Ascending aorta (tissue), 2 donors: ENCODE measurements at regions of chr19 and their contacts with region 1.

Region 1: GRCh38 chr19:57578487-57579205 is at the start of gene ZNF416:
- DNase-seq: peak; percentile 92 to 99
- H3K4me3 ChIP-seq: peak within 1 kb of the TSS; percentile 87 to 91
- H3K27ac ChIP-seq: peak within 1 kb of the TSS; percentile 39 to 62
- H3K4me1 ChIP-seq: peaks cover 0 to 14% of the 10 kb centered on the region in 2 donors
- H3K27me3 ChIP-seq: no peaks in the 10 kb centered on the region
- CTCF ChIP-seq: peak in 1 of 3 experiments; percentile 14
- total RNA-seq, gene ZNF416: 2.7 TPM

Region 2: GRCh38 chr19:57165846-57166245 is 412.8 kb before region 1 on chr19:
- intact Hi-C with region 1: no loop called
- DNase-seq: no peak
- H3K4me3 ChIP-seq: no peak overlapping the region
- H3K27ac ChIP-seq: no peak overlapping the region
- H3K4me1 ChIP-seq: no peaks in the 10 kb centered on the region
- H3K27me3 ChIP-seq: no peaks in the 10 kb centered on the region
- CTCF ChIP-seq: no peak

Region 3: GRCh38 chr19:57527136-57527881 is 51.3 kb before region 1 on chr19 and contains the start of gene ZNF549:
- intact Hi-C with region 1: loop called (anchors 5 kb)
- DNase-seq: peak; percentile 63 to 94
- H3K4me3 ChIP-seq: peak within 1 kb of the TSS; percentile 81 to 85
- H3K27ac ChIP-seq: peak within 1 kb of the TSS; percentile 64 to 74
- H3K4me1 ChIP-seq: peaks cover 2 to 3% of the 10 kb centered on the region in 2 donors
- H3K27me3 ChIP-seq: no peaks in the 10 kb centered on the region
- CTCF ChIP-seq: no peak
- total RNA-seq, gene ZNF549: 2.2 TPM

Region 4: GRCh38 chr19:57559404-57560025 is 19.1 kb before region 1 on chr19 and contains the start of gene ZNF550:
- intact Hi-C with region 1: loop called (anchors 1 kb)
- DNase-seq: peak; percentile 56 to 94
- H3K4me3 ChIP-seq: peak within 1 kb of the TSS; percentile 84 to 99
- H3K27ac ChIP-seq: peak within 1 kb of the TSS; percentile 2 to 44
- H3K4me1 ChIP-seq: peaks cover 0 to 8% of the 10 kb centered on the region in 2 donors
- H3K27me3 ChIP-seq: no peaks in the 10 kb centered on the region
- CTCF ChIP-seq: no peak
- total RNA-seq, gene ZNF550: 22.7 TPM

Region 5: DNA sequence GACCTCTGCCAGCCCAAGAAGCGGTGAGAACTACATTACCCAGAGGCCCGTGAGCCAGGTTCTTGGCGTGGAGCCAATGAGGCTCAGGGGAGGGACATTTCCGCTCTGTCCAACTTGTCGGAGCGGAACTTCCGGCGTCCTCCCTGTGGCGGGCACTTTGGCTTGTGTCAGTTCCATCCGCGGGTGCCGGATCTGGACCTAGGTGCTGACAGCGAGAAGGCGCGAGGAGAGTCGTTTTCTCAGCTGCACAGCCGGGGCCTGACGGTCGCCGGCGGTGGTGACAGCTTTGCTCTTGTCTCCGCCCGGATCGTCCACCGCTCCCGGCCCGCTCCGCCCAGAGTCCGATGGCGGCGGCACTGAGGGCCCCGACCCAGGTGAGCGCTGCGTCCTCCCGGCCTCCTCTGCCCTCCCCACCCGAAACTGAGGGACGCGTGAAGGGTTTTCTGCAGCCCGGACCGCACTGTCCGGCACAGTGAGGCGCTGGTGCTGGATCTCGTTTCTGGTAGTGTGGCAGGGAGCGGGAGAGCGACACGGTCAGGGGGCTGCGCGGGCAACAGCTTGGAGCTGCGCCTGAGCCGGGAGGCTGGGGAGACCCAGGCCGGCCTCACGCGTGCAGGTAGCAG is 21.2 kb after region 1 on chr19 and contains the start of gene ZNF530:
- intact Hi-C with region 1: loop called (anchors 1 kb)
- DNase-seq: peak; percentile 64 to 97
- H3K4me3 ChIP-seq: peak within 1 kb of the TSS; percentile 56 to 70
- H3K27ac ChIP-seq: no peak within 1 kb of the TSS
- H3K4me1 ChIP-seq: peaks cover 0 to 4% of the 10 kb centered on the region in 2 donors
- H3K27me3 ChIP-seq: no peaks in the 10 kb centered on the region
- CTCF ChIP-seq: no peak
- total RNA-seq, gene ZNF530: 2.6 TPM

Region 6: GRCh38 chr19:57814505-57815251 is 236.0 kb after region 1 on chr19 and contains the start of gene ZNF552:
- intact Hi-C with region 1: loop called (anchors 2 kb)
- DNase-seq: peak; percentile 70 to 93
- H3K4me3 ChIP-seq: peak within 1 kb of the TSS; percentile 85 to 87
- H3K27ac ChIP-seq: peak within 1 kb of the TSS; percentile 71 to 75
- H3K4me1 ChIP-seq: peaks cover 2 to 8% of the 10 kb centered on the region in 2 donors
- H3K27me3 ChIP-seq: no peaks in the 10 kb centered on the region
- CTCF ChIP-seq: no peak
- total RNA-seq, gene ZNF552: 6.9 TPM

Region 7: GRCh38 chr19:57927587-57927986 is 348.9 kb after region 1 on chr19:
- intact Hi-C with region 1: loop called (anchors 10 kb)
- DNase-seq: no peak
- H3K4me3 ChIP-seq: no peak overlapping the region
- H3K27ac ChIP-seq: no peak overlapping the region
- H3K4me1 ChIP-seq: no peaks in the 10 kb centered on the region
- H3K27me3 ChIP-seq: no peaks in the 10 kb centered on the region
- CTCF ChIP-seq: no peak

Region 8: GRCh38 chr19:58002384-58003173 is 423.9 kb after region 1 on chr19 and contains the start of gene ZNF606:
- intact Hi-C with region 1: loop called (anchors 5 kb)
- DNase-seq: peak; percentile 25 to 90
- H3K4me3 ChIP-seq: peak within 1 kb of the TSS; percentile 78 to 98
- H3K27ac ChIP-seq: peak within 1 kb of the TSS; percentile 89 to 93
- H3K4me1 ChIP-seq: peaks cover 4 to 11% of the 10 kb centered on the region in 2 donors
- H3K27me3 ChIP-seq: no peaks in the 10 kb centered on the region
- CTCF ChIP-seq: no peak
- total RNA-seq, gene ZNF606: 1.5 TPM